ENCODE measurements at regions of chr16 and their contacts with region 1.

Region 1: DNA sequence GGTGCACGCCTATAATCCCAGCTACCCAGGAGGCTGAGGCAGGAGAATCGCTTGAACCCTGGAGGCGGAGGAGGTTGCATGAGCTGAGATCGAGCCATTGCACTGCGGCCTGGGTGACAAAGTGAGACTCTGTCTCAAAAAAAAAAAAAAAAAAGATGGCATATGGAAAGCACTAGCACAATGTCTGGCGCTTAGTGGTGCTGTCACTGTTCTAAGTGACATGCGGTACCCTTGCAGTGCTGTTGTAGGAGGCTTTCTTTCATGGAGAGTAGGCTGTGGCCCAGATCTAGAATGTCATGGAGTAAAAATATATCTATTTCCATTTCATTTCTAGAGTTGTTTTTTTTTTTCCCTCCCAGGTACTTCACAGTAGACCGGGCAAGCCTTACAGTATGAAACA is 14.6 kb upstream of the METTL9 start:
- DNase-seq: no peak
- H3K4me3 ChIP-seq: no peak overlapping the region
- CTCF ChIP-seq: no peak
- POLR2A ChIP-seq: no peak

Region 2: GRCh38 chr16:21644674-21645073 is 59.9 kb after region 1 on chr16:
- intact Hi-C with region 1: loop called (anchors 5 kb)
- DNase-seq: no peak
- H3K4me3 ChIP-seq: no peak overlapping the region
- CTCF ChIP-seq: no peak
- POLR2A ChIP-seq: no peak

Region 3: DNA sequence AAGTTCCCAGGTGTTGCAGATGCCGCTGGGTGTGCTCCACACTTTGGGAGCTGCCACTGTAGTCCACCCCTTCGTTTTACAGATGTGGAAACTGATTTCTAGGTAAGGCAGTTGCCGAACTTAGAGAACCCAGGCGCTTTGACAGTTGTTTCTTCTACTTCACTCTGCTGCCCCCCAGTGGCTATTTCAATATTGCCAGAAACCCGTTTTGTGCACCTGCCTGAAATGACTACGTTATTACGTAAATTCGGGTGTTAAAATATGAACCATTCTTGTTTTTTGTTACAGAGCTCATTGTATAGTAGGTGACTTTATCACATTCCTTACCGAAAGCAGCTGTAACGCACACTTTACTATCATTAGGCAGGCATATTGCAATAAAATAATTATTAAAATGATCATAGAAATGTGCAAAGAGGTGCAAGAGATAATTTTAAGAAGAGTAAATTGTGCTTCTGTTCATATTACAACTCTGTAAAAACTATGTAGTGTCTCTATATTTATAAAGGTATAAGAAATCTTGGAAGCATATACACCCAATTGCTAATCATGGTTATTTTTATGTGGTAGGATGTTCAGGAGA is 123.8 kb after region 1 on chr16:
- intact Hi-C with region 1: loop called (anchors 5 kb)
- DNase-seq: peak; percentile 79 to 95
- H3K4me3 ChIP-seq: no peak overlapping the region
- CTCF ChIP-seq: no peak
- POLR2A ChIP-seq: no peak